ENCODE measurements at regions of chr21 and their contacts with region 1.

Region 1: GRCh38 chr21:46635324-46636172 is at the start of gene PRMT2:
- DNase-seq: peak; percentile 98
- H3K4me3 Mint-ChIP-seq: peak within 1 kb of the TSS; percentile 93
- H3K27ac Mint-ChIP-seq: peak within 1 kb of the TSS; percentile 90
- H3K4me1 Mint-ChIP-seq: peaks cover 69% of the 10 kb centered on the region
- H3K27me3 Mint-ChIP-seq: peaks cover 8% of the 10 kb centered on the region
- total RNA-seq, gene PRMT2: 55.7 and 58.7 TPM in 2 replicates

Region 2: GRCh38 chr21:46465651-46466050 is 169.9 kb before region 1 on chr21:
- intact Hi-C with region 1: no loop called
- DNase-seq: no peak
- H3K4me3 Mint-ChIP-seq: no peak overlapping the region
- H3K27ac Mint-ChIP-seq: no peak overlapping the region
- H3K4me1 Mint-ChIP-seq: peaks cover 25% of the 10 kb centered on the region
- H3K27me3 Mint-ChIP-seq: no peaks in the 10 kb centered on the region

Region 3: GRCh38 chr21:46559291-46559983 is 76.1 kb before region 1 on chr21:
- intact Hi-C with region 1: loop called (anchors 1 kb)
- DNase-seq: peak; percentile 47
- H3K4me3 Mint-ChIP-seq: peak overlapping the region; percentile 73
- H3K27ac Mint-ChIP-seq: peak overlapping the region; percentile 95
- H3K4me1 Mint-ChIP-seq: peaks cover 40% of the 10 kb centered on the region
- H3K27me3 Mint-ChIP-seq: no peaks in the 10 kb centered on the region

Region 4: DNA sequence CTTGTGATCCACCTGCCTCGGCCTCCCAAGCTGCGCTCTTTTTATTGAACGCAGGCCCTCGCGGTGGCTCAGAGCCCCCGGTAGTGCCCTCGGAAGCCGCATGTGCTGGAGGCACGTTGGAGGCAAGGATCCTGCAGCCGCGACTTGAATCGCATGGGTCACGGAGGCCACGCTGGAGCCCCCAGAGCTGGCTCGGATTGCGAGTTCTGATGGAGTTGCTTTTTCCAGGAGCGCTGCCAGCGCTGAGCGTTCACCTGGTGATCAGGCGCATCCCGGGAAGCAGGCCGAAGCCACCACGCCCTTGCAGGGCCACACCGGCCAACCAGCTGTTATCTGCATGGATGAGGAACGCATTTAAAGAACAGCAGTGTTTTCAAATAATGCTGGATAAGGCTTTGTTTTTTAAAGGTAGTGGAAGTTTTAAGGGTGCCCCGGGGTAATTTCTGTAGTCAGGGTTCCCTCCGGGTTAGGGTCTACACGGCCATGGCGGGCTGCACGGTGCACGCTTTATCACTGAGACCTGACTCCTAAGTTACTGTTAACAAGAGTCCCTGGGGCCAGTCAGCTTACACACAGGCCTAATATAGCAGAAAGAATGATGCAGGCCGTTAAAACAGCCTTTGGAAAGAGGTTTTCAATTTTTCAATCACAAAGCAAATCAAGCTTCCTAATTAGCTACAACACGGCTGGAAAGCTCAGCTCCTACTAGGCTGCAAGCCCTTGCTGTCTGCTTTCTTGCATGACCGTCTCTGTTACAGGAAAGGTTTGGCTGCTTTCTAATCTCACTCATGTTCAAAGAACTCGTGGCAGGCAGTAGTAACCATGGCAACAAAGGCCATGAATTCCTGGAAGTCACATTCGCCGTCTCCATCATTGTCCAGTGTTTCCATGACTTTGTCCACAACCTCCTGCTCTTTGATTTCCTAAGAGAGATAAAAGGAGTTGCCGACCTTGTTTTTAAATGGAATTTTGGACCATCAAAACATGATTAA is 36.7 kb before region 1 on chr21:
- intact Hi-C with region 1: no loop called
- DNase-seq: no peak
- H3K4me3 Mint-ChIP-seq: no peak overlapping the region
- H3K27ac Mint-ChIP-seq: no peak overlapping the region
- H3K4me1 Mint-ChIP-seq: peaks cover 6% of the 10 kb centered on the region
- H3K27me3 Mint-ChIP-seq: peaks cover under 1% of the 10 kb centered on the region

Region 5: GRCh38 chr21:46622226-46622625 is 13.3 kb before region 1 on chr21:
- intact Hi-C with region 1: loop called (anchors 1 kb)
- DNase-seq: peak; percentile 45
- H3K4me3 Mint-ChIP-seq: peak overlapping the region; percentile 57
- H3K27ac Mint-ChIP-seq: peak overlapping the region; percentile 87
- H3K4me1 Mint-ChIP-seq: peaks cover 20% of the 10 kb centered on the region
- H3K27me3 Mint-ChIP-seq: peaks cover 3% of the 10 kb centered on the region